Right ventricle myocardium inferior (tissue), 1 donor: ENCODE measurements at regions of chr16 and their contacts with region 1.

Region 1: DNA sequence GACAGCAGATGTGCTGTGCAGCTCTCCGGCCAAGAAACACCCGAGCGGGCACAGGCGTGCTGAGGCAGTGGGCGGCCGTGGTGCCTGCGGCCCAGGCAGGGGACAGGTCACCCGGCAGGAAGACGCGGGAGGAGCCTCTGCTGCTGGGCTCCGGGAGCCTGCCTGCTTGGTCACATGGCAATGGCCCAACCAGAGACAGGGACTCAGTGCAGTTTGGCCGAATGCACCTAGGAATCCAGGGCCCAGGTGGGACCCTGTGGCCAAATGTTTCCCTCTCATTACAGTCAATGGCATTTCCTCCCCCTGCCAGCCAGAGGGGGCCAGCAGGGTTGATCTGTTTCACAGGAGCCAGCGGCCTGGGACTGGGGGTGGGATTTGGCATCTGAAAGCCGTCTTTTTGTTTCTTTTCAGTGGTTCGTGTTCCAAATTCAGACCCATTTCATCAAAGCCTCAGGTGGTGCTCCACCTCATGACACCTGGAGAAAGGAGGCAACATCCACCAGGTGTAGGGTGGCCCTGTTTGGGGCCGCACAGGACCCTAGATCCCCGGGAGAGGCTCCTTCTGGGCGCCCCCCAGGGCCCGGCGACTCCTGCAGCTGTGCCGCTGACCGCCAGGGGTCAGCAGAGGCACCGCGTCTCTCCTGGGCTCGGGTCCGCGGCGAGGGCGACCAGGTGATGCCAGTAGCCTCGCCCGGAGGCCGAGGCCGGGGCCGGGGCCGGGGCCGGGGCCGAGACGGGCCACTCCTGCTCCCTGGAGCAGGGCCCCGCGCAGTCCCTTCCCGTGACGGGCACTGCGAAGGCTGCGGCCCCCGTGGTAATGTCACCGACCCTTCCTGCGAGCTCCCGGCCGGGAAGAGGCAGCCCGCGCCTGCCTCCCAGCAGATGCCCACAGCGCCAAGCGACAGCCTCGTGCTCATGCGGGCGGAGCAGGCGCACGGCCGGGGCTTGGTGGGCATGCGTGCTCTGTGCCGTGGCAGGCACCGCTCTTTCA is 118.5 kb downstream of the C16orf78 start:
- DNase-seq: peak; percentile 74
- ATAC-seq: peak; percentile 67

Region 2: DNA sequence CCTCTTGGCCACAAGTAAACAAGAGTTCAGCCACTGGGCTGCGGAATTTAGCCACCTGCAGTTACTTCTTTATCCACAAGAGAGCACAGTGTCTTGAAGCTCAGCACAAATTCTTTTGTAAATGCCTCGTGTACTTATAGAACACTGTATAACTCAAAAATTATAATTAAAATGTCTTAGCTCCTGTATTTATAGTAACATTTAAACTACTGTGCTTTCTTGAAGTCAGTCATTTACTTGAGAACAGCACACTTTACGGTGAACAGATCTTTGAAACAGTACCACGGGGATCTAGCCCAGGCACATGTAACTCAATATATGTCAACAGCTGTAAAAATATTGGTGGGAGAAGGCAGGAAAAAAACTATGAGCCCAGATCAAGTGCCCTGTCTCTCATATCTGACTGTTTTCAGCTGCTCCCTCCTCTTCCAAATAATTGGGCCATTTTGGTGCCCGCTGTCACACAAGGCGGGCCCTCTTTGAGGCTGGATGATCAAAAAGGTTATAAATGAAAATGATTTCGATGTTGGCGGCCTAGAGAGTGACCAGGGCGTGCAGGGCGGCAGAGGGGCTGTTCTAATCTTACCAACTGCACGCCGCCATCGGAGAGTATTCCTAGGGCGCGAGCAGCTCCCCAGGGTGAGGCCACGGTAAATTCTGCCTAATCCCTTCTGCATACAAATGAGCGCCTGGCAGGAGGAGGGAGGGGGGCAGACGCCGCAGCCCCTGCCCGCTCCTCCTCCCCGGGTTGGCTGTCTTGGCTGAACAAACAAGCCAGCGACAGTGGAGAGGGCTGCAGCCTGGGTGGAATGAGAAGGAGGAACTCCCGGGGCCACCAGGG is 64.8 kb after region 1 on chr16:
- intact Hi-C with region 1: no loop called
- DNase-seq: no peak
- ATAC-seq: no peak

Region 3: DNA sequence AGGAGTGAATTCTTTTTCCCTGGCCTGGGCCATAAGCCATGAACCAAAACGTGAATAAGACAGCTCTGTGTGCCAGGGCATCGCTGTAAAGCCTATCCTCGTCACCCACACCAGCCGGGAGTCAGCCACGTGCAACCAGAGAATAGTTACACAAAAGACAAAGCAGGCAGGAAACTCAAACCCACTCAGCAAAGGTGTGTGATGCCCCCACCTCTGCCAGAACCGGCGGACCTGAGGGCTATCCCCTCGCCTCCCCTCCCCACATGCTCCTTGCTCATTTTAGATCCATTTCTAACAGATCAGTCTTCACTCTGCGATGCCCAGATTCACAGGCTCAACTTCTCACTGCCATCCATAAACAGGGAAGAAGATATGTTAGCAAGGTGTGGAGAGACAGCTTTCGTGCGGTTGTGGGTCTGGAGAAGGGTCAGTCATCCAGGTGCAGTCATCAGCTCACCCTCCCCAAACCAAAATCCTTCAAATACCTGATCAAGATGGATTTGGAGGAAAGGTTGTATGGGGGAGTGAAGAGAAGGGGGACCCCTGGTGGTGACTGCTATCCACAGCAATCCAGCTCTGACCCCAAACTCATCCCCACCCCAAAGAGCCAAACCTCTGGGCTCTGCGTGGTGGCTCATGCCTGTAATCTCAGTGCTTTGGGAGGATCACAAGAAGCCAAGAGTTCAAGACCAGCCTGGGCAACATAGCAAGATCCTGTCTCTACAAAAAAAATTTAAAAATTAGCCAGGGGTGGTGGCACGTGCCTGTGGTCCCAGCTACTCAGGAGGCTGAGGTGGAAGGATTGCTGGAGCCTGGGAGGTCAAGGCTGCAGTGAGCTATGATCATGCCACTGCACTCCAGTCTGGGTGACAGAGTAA is 100.7 kb after region 1 on chr16:
- intact Hi-C with region 1: loop called (anchors 2 kb)
- DNase-seq: no peak
- ATAC-seq: no peak

Region 4: DNA sequence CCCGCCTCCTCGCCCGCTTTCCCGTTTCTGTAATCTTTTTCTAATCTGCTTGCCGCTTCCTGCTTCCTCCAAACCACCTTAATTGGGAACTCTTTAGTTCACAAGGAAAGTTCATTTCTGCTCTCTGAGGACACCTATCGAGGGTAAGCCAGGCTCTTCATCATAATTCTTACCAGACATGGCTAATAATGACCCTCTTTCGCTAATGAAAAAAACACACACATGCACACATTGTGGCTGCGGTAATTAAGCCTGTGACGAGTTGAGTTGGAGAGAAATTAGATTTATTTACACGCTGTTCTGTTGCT is 263.2 kb after region 1 on chr16:
- intact Hi-C with region 1: loop called (anchors 5 kb)
- DNase-seq: no peak
- ATAC-seq: peak; percentile 36

Region 5: DNA sequence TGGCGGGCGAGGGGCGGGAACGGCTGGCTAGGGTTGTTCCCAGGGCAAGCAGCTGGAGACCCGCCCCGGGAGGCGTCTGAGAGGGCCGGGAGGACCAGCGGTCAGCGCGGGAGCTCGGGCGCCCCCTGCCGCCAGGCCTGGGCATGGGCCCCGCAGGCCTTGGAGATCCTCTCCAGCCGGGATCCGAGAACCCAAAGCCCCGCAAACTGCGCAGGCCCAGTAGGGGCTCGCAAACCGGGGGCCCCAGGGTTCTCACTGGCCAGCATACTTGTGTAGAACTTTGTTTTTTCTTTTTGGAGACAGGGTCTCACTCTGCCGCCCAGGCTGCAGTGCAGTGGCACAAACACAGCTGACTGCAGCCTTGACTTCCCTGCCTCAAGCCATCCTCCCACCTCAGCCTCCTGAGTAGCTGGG is 384.7 kb after region 1 on chr16:
- intact Hi-C with region 1: loop called (anchors 5 kb)
- DNase-seq: peak; percentile 83
- ATAC-seq: peak; percentile 91

Region 6: GRCh38 chr16:49937886-49938285 is 445.8 kb after region 1 on chr16:
- intact Hi-C with region 1: no loop called
- DNase-seq: no peak
- ATAC-seq: no peak